CD8-positive, alpha-beta memory T cell (primary cell): ENCODE measurements at regions of chr14 and their contacts with region 1.

Region 1: GRCh38 chr14:100383727-100384158 is 60.6 kb downstream of the SLC25A47 start:
- DNase-seq: peak; percentile 51 to 78 (median 57)
- H3K4me3 ChIP-seq: no peak overlapping the region
- H3K4me3 Mint-ChIP-seq: no peak overlapping the region
- H3K27ac ChIP-seq: no peak overlapping the region
- H3K27ac Mint-ChIP-seq: no peak overlapping the region
- H3K4me1 ChIP-seq: peaks cover 12% of the 10 kb centered on the region
- H3K4me1 Mint-ChIP-seq: peaks cover 8 to 15% (median 11%) of the 10 kb centered on the region in 3 donors
- H3K27me3 ChIP-seq: no peaks in the 10 kb centered on the region
- H3K27me3 Mint-ChIP-seq: no peaks in the 10 kb centered on the region

Region 2: GRCh38 chr14:100654814-100655740 is 271.3 kb after region 1 on chr14:
- CTCF ChIA-PET with region 1: interaction called, 37 read pairs
- POLR2A ChIA-PET with region 1: no interaction called
- DNase-seq: peak in 4 of 5 donors; percentile 14 to 22 (median 20)
- H3K4me3 ChIP-seq: no peak overlapping the region
- H3K4me3 Mint-ChIP-seq: no peak overlapping the region
- H3K27ac ChIP-seq: no peak overlapping the region
- H3K27ac Mint-ChIP-seq: peak overlapping the region in 1 of 8 donors; percentile 33
- H3K4me1 ChIP-seq: peaks cover 3% of the 10 kb centered on the region
- H3K4me1 Mint-ChIP-seq: peaks cover 0 to 10% (median 6%) of the 10 kb centered on the region in 3 donors
- H3K27me3 ChIP-seq: peaks cover 27% of the 10 kb centered on the region
- H3K27me3 Mint-ChIP-seq: peaks cover 17 to 26% of the 10 kb centered on the region in 2 donors